Body of pancreas (tissue), 4 donors: ENCODE measurements at regions of chr6 and their contacts with region 1.

Region 1: DNA sequence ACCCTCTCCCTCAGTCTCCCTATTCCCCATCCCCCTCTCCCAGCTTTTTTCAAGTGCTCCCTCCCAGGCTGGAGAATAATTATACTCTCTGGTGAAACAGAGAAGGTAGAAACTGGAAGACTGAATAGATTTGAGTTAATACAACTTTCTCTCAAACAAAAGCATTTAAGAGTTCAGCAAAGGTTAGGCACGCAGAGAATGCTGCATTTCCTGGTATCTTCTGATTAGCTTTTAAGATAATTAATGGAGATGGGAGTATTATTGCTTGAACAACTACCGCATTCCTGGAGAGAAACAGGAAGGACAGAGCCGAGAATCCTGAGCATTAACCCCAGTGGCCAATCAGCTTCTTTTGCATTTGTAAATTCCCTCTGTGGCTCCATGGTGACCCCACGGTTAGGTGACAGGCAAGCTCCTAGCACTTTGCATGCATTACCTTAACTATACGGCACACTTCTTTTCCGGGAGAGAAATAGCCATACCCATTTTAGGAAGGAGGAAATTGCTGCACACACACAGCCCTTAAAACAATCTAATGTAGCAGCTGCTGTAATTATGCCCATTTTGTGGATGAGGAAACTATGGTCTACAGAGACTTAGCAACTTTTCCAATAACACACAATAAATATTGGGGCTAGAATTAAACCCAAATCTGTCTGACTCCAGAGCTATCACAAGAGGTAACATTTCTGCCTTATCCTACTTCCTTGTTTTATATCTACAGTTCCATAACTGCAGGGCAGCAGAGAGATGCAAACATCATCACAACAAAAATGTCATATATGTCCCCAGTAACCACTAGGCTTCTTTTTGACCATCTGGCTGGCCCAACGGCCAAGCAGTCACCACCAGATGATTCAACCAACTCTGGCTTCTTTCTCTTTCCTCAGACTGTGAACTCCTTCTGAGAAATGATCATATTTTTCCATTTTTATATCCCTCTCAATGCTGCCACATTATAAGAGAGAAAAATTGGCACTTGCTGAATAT is 169.9 kb downstream of the CD24 start:
- DNase-seq: no peak
- ATAC-seq: peak; percentile 59
- H3K4me3 ChIP-seq: no peak overlapping the region
- H3K27ac ChIP-seq: peak overlapping the region in 3 of 4 donors; percentile 35 to 69 (median 54)
- H3K4me1 ChIP-seq: peaks cover 47% of the 10 kb centered on the region
- H3K27me3 ChIP-seq: no peaks in the 10 kb centered on the region
- CTCF ChIP-seq: no peak
- POLR2A ChIP-seq: no peak

Region 2: DNA sequence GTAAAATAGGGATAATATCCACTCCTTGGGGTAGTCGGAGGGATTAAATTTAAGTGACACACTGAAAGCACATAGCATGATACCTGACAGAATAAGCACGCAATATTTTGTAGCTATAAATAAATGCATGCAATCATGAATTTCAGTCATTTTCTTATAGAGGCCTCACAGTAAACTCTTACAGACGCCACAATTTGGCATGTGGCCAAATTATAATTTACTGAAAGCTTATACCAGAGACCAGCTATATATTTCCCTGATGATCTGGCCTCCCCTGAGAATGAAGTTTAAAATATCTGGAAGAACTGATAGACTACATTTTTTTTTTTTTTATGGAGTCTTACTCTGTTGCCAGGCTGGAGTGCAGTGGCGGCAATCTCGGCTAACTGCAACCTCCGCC is 134.4 kb before region 1 on chr6:
- intact Hi-C with region 1: no loop called
- DNase-seq: no peak
- ATAC-seq: no peak
- H3K4me3 ChIP-seq: no peak overlapping the region
- H3K27ac ChIP-seq: no peak overlapping the region
- H3K4me1 ChIP-seq: no peaks in the 10 kb centered on the region
- H3K27me3 ChIP-seq: no peaks in the 10 kb centered on the region
- CTCF ChIP-seq: no peak
- POLR2A ChIP-seq: no peak

Region 3: DNA sequence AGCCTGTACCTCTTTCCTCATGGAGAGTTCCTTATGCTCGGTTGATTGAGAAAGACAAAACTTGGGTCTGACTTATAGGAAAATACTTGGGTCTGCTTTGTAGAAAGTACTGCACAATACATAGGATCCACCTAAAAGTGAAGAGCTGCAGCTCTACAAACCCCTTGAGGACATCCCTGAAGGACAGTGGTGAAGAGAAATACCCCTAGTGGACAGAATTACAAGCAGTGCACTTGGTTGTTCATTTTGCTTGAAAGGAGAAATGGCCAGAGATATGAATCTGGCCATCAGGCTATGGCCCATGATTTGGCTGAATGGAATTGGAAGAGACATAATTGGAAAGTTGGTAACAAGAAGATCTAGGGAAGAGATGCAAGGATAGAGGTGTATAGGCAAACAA is 161.6 kb after region 1 on chr6:
- intact Hi-C with region 1: loop called (anchors 10 kb)
- DNase-seq: no peak
- ATAC-seq: no peak
- H3K4me3 ChIP-seq: no peak overlapping the region
- H3K27ac ChIP-seq: peak overlapping the region in 1 of 4 donors; percentile 68
- H3K4me1 ChIP-seq: peaks cover 22% of the 10 kb centered on the region
- H3K27me3 ChIP-seq: no peaks in the 10 kb centered on the region
- CTCF ChIP-seq: peak in 1 of 7 experiments; percentile 4
- POLR2A ChIP-seq: no peak

Region 4: GRCh38 chr6:108423982-108424705 is 1619.5 kb after region 1 on chr6:
- intact Hi-C with region 1: no loop called
- DNase-seq: no peak
- ATAC-seq: no peak
- H3K4me3 ChIP-seq: no peak overlapping the region
- H3K27ac ChIP-seq: no peak overlapping the region
- H3K4me1 ChIP-seq: no peaks in the 10 kb centered on the region
- H3K27me3 ChIP-seq: no peaks in the 10 kb centered on the region
- CTCF ChIP-seq: no peak
- POLR2A ChIP-seq: no peak